Activated CD4-positive, alpha-beta T cell treated with anti-CD3 and anti-CD28 coated beads, Interleukin-2, amount 10 ng/mL, durations not matched to agents 24 days and 14 days (primary cell): ENCODE measurements at regions of chr12 and their contacts with region 1.

Region 1: DNA sequence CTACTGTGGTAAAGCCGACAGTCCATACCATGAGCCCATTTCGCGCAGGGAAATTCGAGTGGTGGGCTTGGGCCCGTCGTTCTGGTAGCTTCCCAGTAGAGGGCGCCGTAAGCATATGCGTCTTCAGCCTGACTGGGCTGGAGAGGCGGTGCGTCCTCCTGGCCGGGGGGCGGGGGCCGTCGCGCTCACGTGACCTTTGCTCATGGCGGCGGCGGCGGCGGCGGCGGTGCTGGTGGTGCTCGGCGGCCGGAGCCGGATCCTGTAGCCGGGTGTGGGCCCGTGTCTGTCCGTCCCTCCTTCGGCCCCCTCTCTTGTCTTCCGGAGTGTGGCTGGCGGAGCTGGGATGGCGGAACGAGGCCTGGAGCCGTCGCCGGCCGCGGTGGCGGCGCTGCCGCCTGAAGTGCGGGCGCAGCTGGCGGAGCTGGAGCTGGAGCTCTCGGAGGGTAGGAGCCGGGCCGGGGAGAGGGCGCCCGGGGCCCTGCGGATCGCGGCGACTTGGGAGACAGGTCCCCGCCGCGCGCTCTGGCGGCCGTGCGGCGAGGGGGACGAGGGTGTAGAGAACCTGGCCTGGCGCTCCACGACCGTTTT is at the start of gene DIP2B:
- DNase-seq: peak; percentile 99
- H3K4me3 Mint-ChIP-seq: peak within 1 kb of the TSS; percentile 99
- H3K27ac Mint-ChIP-seq: peak within 1 kb of the TSS; percentile 98
- H3K4me1 Mint-ChIP-seq: peaks cover 45% of the 10 kb centered on the region
- H3K27me3 Mint-ChIP-seq: no peaks in the 10 kb centered on the region
- total RNA-seq, gene DIP2B: 26.4 and 29.4 TPM in 2 replicates

Region 2: GRCh38 chr12:49170924-49171323 is 1334.0 kb before region 1 on chr12:
- intact Hi-C with region 1: no loop called
- DNase-seq: no peak
- H3K4me3 Mint-ChIP-seq: no peak overlapping the region
- H3K27ac Mint-ChIP-seq: no peak overlapping the region
- H3K4me1 Mint-ChIP-seq: no peaks in the 10 kb centered on the region
- H3K27me3 Mint-ChIP-seq: peaks cover 11% of the 10 kb centered on the region

Region 3: DNA sequence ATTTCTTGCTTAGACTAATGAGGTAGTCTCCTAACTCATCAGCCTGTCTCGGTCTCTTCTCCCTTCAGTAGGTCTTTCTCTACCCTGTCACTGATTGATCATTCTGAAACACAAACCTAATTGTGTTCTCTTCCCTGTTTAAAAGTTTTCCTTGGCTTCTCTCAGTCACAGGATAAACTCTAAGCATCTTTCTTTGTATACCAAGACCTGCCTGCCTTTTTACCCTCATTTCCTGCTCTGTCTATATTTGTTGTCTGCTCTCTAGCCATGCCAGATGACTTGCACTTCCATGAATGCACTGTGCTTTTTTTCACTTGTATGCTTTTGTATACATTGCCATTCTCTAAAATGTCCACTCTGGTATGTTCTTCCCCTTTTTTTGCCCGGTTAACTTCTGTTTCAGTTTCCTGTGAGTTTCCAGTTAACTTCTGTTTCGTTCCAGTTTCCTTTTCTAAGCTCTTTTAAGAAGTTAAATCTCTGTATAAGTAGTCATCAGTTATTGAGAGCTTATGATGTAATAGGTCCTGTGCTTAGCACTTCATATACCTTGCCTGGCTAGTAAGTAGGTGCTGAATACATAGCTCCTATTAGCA is 12.7 kb after region 1 on chr12:
- intact Hi-C with region 1: loop called (anchors 1 kb)
- DNase-seq: peak; percentile 76
- H3K4me3 Mint-ChIP-seq: no peak overlapping the region
- H3K27ac Mint-ChIP-seq: no peak overlapping the region
- H3K4me1 Mint-ChIP-seq: peaks cover 48% of the 10 kb centered on the region
- H3K27me3 Mint-ChIP-seq: no peaks in the 10 kb centered on the region

Region 4: GRCh38 chr12:50542448-50542847 is 37.6 kb after region 1 on chr12:
- intact Hi-C with region 1: loop called (anchors 2 kb)
- DNase-seq: peak; percentile 65
- H3K4me3 Mint-ChIP-seq: no peak overlapping the region
- H3K27ac Mint-ChIP-seq: peak overlapping the region; percentile 91
- H3K4me1 Mint-ChIP-seq: peaks cover 29% of the 10 kb centered on the region
- H3K27me3 Mint-ChIP-seq: no peaks in the 10 kb centered on the region

Region 5: GRCh38 chr12:50597200-50598195 is 92.6 kb after region 1 on chr12:
- intact Hi-C with region 1: loop called (anchors 2 kb)
- DNase-seq: peak; percentile 81
- H3K4me3 Mint-ChIP-seq: peak overlapping the region; percentile 17
- H3K27ac Mint-ChIP-seq: peak overlapping the region; percentile 68
- H3K4me1 Mint-ChIP-seq: peaks cover 21% of the 10 kb centered on the region
- H3K27me3 Mint-ChIP-seq: no peaks in the 10 kb centered on the region

Region 6: DNA sequence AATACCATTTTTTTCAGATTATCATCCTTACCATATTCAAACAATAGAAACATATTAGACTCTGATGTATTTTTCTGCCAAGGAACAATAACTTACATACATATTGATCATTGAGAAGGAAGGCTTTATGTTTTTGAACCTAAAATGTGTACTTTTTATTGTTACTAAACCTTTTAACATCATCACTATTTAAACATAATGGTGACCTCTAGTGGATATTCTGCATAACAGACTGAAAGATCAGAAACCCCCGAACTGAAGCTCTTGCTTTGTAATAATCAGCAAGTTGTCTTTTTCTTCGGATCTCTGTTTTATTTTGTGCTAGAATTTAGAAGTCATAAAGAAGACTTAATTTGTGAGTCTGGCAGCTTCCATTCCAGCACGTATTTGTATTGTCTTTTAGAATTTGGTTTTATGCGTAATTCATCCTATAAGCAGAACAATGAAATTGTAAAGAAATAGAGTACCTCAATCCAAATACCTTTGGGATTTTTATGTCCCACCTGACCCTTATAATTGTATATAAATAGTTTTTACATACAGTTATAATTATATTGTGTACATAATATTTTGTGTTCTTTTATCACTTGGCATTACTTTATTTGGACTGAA is 133.1 kb after region 1 on chr12:
- intact Hi-C with region 1: loop called (anchors 1 kb)
- DNase-seq: no peak
- H3K4me3 Mint-ChIP-seq: no peak overlapping the region
- H3K27ac Mint-ChIP-seq: no peak overlapping the region
- H3K4me1 Mint-ChIP-seq: peaks cover 30% of the 10 kb centered on the region
- H3K27me3 Mint-ChIP-seq: no peaks in the 10 kb centered on the region

Region 7: DNA sequence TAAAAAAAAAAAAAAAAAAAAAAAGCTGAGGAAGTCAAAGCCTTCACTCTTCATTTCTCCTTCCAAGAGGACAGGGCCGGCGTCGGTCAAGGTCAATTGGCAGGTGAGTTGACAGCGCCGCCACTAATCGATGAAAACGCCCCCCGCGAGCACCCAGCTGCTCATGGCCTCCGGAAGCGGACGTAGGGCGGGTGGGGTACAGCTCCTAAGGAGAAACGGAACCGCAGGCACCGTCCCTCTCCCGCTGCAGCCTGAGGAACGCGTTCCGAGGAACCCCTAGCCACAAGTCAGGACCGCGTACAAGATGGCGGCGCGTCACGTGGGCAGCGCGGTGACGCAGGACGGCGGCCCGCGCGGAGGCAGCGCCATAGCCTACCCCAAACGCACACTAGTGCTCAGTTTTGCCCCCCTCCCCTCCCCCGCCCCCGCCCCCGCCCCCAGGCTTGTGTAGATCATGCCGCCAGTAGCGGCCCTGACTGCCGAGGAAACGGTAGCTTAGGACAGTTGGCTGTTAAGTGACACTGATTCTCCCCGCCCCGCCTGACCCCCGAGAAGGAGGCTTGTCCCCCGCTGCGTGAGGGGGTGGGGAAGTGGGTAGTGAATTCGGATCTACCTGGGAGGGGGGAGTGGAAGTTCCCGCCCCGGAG is 258.9 kb after region 1 on chr12 and contains the start of gene ATF1:
- intact Hi-C with region 1: loop called (anchors 2 kb)
- DNase-seq: peak; percentile 98
- H3K4me3 Mint-ChIP-seq: peak within 1 kb of the TSS; percentile 94
- H3K27ac Mint-ChIP-seq: peak within 1 kb of the TSS; percentile 99
- H3K4me1 Mint-ChIP-seq: peaks cover 31% of the 10 kb centered on the region
- H3K27me3 Mint-ChIP-seq: no peaks in the 10 kb centered on the region
- total RNA-seq, gene ATF1: 66.0 and 67.6 TPM in 2 replicates